ENCODE measurements at regions of chr19 and their contacts with region 1.

Region 1: GRCh38 chr19:34253699-34254551 is 429 bp upstream of the GARRE1 start:
- DNase-seq: peak in 7 of 9 donors; percentile 75 to 88 (median 86)
- ATAC-seq: peak; percentile 51
- H3K4me3 ChIP-seq: peak overlapping the region; percentile 72
- H3K4me3 Mint-ChIP-seq: peak overlapping the region; percentile 86 to 100 (median 96)
- H3K27ac ChIP-seq: peak overlapping the region; percentile 97
- H3K27ac Mint-ChIP-seq: peak overlapping the region; percentile 94 to 100 (median 97)
- H3K4me1 ChIP-seq: peaks cover 6 to 27% of the 10 kb centered on the region in 2 donors
- H3K4me1 Mint-ChIP-seq: peaks cover 12 to 48% (median 36%) of the 10 kb centered on the region in 7 donors
- H3K27me3 ChIP-seq: no peaks in the 10 kb centered on the region
- H3K27me3 Mint-ChIP-seq: no peaks in the 10 kb centered on the region

Region 2: DNA sequence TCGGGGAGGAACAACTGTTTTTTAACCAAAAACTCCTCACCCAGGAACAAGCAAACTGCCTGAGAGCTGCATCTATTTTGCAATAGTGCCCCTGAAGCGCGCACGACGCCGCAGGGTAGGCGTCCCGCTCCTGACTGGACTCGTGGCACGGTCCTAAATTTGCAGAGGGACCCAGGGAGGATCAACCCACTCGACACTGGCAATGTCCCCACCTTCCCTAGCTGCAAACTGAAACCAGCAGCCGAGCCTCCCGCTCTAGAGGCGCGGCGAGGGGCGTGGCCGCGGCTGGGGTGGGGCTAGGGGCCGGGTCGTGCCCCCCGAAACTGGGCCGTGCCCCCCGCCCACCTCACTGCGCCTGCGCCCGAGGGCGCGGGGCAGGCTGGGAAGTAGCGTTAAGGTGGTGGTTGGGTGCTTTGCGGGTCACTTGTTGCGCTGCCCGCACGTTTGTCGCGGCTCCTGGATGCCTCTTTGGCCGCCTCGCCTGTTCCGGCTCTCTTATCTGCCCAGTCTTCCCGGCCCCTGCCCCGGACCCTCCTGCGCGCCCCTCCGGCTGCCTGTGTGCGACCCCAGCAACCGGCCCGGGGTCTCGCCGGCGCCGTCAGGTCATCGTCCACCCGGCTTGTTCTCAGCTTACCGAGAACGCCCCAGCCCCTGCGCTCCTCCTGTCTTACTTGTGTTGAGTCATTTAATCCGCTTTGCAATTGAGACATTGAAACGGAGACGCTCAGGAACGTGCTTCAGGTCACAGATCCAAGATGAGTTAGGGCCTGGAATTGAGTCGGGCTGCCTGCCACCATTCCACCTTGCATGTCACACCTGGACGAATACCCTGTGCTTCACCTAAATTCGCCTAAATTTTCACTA is 119.5 kb before region 1 on chr19:
- CTCF ChIA-PET with region 1: no interaction called
- POLR2A ChIA-PET with region 1: no interaction called
- intact Hi-C with region 1: no loop called
- DNase-seq: peak; percentile 79 to 92 (median 87)
- ATAC-seq: peak; percentile 99
- H3K4me3 ChIP-seq: peak overlapping the region; percentile 91
- H3K4me3 Mint-ChIP-seq: peak overlapping the region; percentile 94 to 97 (median 95)
- H3K27ac ChIP-seq: peak overlapping the region; percentile 91
- H3K27ac Mint-ChIP-seq: peak overlapping the region; percentile 90 to 96 (median 91)
- H3K4me1 ChIP-seq: peaks cover 0 to 7% of the 10 kb centered on the region in 2 donors
- H3K4me1 Mint-ChIP-seq: peaks cover 3 to 11% (median 8%) of the 10 kb centered on the region in 7 donors
- H3K27me3 ChIP-seq: no peaks in the 10 kb centered on the region
- H3K27me3 Mint-ChIP-seq: peaks cover 0 to 3% (median 0%) of the 10 kb centered on the region in 5 donors

Region 3: GRCh38 chr19:34317311-34317927 is 63.5 kb after region 1 on chr19:
- CTCF ChIA-PET with region 1: no interaction called
- POLR2A ChIA-PET with region 1: interaction called, 3 read pairs
- intact Hi-C with region 1: loop called in 1 of 2 experiments (anchors 1 kb)
- DNase-seq: peak in 7 of 9 donors; percentile 27 to 58 (median 37)
- ATAC-seq: peak; percentile 79
- H3K4me3 ChIP-seq: peak overlapping the region; percentile 11
- H3K4me3 Mint-ChIP-seq: peak overlapping the region in 9 of 10 donors; percentile 67 to 79 (median 73)
- H3K27ac ChIP-seq: no peak overlapping the region
- H3K27ac Mint-ChIP-seq: peak overlapping the region; percentile 7 to 95 (median 82)
- H3K4me1 ChIP-seq: peaks cover 3 to 26% of the 10 kb centered on the region in 2 donors
- H3K4me1 Mint-ChIP-seq: peaks cover 13 to 68% (median 54%) of the 10 kb centered on the region in 7 donors
- H3K27me3 ChIP-seq: no peaks in the 10 kb centered on the region
- H3K27me3 Mint-ChIP-seq: no peaks in the 10 kb centered on the region